ENCODE measurements at regions of chr10 and their contacts with region 1.

Region 1: GRCh38 chr10:80453701-80454513 is at the start of gene TSPAN14:
- DNase-seq: peak; percentile 68 to 81 (median 70)
- H3K4me3 ChIP-seq: peak within 1 kb of the TSS; percentile 93
- H3K4me3 Mint-ChIP-seq: peak within 1 kb of the TSS; percentile 88 to 99 (median 99)
- H3K27ac ChIP-seq: peak within 1 kb of the TSS; percentile 77
- H3K27ac Mint-ChIP-seq: peak within 1 kb of the TSS; percentile 84 to 99 (median 95)
- H3K4me1 ChIP-seq: peaks cover 32% of the 10 kb centered on the region
- H3K4me1 Mint-ChIP-seq: peaks cover 38 to 45% (median 44%) of the 10 kb centered on the region in 3 donors
- H3K27me3 ChIP-seq: no peaks in the 10 kb centered on the region
- H3K27me3 Mint-ChIP-seq: no peaks in the 10 kb centered on the region
- total RNA-seq, gene TSPAN14: 46.1 to 46.8 TPM

Region 2: DNA sequence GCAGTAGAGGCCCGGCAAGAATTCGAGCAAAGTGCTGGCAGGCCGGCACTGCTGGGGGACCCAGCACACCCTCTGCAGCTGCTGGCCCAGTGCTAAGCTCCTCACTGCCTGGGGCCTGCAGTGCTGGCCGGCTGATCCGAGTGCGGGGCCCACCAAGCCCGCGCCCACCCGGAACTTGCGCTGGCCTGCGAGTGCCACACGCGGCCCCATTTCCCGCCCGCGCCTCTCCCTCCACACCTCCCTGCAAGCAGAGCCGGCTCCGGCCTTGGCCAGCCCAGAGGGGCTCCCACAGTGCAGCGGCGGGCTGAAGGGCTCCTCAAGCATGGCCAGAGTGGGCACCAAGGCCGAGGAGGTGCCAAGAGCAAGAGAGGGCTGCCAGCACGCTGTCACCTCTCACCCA is 94.3 kb before region 1 on chr10:
- CTCF ChIA-PET with region 1: no interaction called
- POLR2A ChIA-PET with region 1: no interaction called
- DNase-seq: no peak
- H3K4me3 ChIP-seq: no peak overlapping the region
- H3K4me3 Mint-ChIP-seq: no peak overlapping the region
- H3K27ac ChIP-seq: no peak overlapping the region
- H3K27ac Mint-ChIP-seq: no peak overlapping the region
- H3K4me1 ChIP-seq: no peaks in the 10 kb centered on the region
- H3K4me1 Mint-ChIP-seq: peaks cover 9 to 14% (median 10%) of the 10 kb centered on the region in 3 donors
- H3K27me3 ChIP-seq: no peaks in the 10 kb centered on the region
- H3K27me3 Mint-ChIP-seq: peaks cover 22 to 28% of the 10 kb centered on the region in 2 donors

Region 3: GRCh38 chr10:80464557-80465450 is 10.9 kb after region 1 on chr10:
- CTCF ChIA-PET with region 1: interaction called, 94 read pairs
- POLR2A ChIA-PET with region 1: interaction called, 27 read pairs
- DNase-seq: peak in 1 of 5 donors; percentile 49
- H3K4me3 ChIP-seq: peak overlapping the region; percentile 53
- H3K4me3 Mint-ChIP-seq: peak overlapping the region; percentile 68 to 99 (median 99)
- H3K27ac ChIP-seq: peak overlapping the region; percentile 22
- H3K27ac Mint-ChIP-seq: peak overlapping the region; percentile 84 to 100 (median 98)
- H3K4me1 ChIP-seq: peaks cover 100% of the 10 kb centered on the region
- H3K4me1 Mint-ChIP-seq: peaks cover 94 to 100% (median 100%) of the 10 kb centered on the region in 3 donors
- H3K27me3 ChIP-seq: no peaks in the 10 kb centered on the region
- H3K27me3 Mint-ChIP-seq: no peaks in the 10 kb centered on the region

Region 4: GRCh38 chr10:80498833-80499741 is 45.2 kb after region 1 on chr10:
- CTCF ChIA-PET with region 1: interaction called, 498 read pairs
- POLR2A ChIA-PET with region 1: interaction called, 5 read pairs
- DNase-seq: peak in 2 of 5 donors; percentile 25 to 60
- H3K4me3 ChIP-seq: peak overlapping the region; percentile 35
- H3K4me3 Mint-ChIP-seq: peak overlapping the region; percentile 64 to 86 (median 78)
- H3K27ac ChIP-seq: peak overlapping the region; percentile 49
- H3K27ac Mint-ChIP-seq: peak overlapping the region; percentile 92 to 99 (median 96)
- H3K4me1 ChIP-seq: peaks cover 98% of the 10 kb centered on the region
- H3K4me1 Mint-ChIP-seq: peaks cover 97 to 100% (median 99%) of the 10 kb centered on the region in 3 donors
- H3K27me3 ChIP-seq: no peaks in the 10 kb centered on the region
- H3K27me3 Mint-ChIP-seq: no peaks in the 10 kb centered on the region

Region 5: GRCh38 chr10:80988755-80989154 is 534.8 kb after region 1 on chr10:
- CTCF ChIA-PET with region 1: no interaction called
- POLR2A ChIA-PET with region 1: no interaction called
- DNase-seq: no peak
- H3K4me3 ChIP-seq: no peak overlapping the region
- H3K4me3 Mint-ChIP-seq: no peak overlapping the region
- H3K27ac ChIP-seq: no peak overlapping the region
- H3K27ac Mint-ChIP-seq: no peak overlapping the region
- H3K4me1 ChIP-seq: no peaks in the 10 kb centered on the region
- H3K4me1 Mint-ChIP-seq: no peaks in the 10 kb centered on the region
- H3K27me3 ChIP-seq: no peaks in the 10 kb centered on the region
- H3K27me3 Mint-ChIP-seq: peaks cover 0 to 2% of the 10 kb centered on the region in 2 donors